CD8-positive, alpha-beta T cell (primary cell): ENCODE measurements at regions of chr1 and their contacts with region 1.

Region 1: DNA sequence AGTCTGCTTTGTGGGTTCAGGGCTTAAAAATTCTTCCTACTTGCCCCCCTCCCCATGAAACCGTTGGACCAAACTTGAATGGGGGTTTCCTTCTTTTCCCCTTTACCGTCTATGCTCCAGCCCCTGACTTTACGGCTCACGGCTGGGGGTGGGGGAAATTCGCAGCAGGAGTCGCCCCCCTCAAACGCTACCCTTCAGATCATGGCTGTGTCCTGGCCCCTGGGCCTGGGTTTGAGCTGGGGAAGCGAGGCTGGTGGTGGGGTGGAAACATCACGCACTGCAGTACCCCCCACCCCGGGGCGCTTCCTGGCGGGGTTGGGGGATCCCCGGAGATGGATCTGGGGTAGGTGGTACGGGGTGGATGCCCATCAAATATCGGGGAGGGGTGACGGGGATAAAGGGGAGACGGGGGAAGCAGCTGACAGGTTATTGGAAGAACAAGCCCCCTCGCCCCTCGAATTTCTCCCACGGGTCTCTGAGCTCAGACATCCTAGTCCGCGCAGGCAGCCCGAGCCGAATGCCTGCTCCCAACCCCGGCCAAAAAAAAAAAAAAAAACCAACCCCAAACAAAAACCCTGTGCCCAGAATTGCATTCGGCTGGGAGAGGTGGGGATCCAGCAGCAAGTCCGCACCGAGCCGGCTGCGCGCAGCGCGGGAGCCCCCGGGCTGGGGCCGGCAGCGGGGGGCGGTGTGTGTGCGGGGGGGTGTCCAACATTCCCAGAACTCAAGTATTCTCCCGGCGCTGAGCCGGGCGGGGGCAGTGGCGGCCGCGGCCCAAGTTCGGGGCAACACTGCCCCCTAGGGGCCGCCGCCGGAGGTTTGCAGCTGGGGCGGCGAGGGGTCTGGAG is 59.0 kb upstream of the ACOT11 start:
- DNase-seq: peak; percentile 45 to 89 (median 74)
- ATAC-seq: peak; percentile 47
- H3K4me3 ChIP-seq: peak overlapping the region; percentile 71 to 90
- H3K4me3 Mint-ChIP-seq: peak overlapping the region; percentile 83
- H3K27ac ChIP-seq: peak overlapping the region; percentile 42 to 73
- H3K27ac Mint-ChIP-seq: peak overlapping the region; percentile 67
- H3K4me1 ChIP-seq: peaks cover 34% of the 10 kb centered on the region
- H3K4me1 Mint-ChIP-seq: peaks cover 37% of the 10 kb centered on the region
- H3K27me3 ChIP-seq: peaks cover 0 to 3% of the 10 kb centered on the region in 2 experiments
- H3K27me3 Mint-ChIP-seq: peaks cover 3% of the 10 kb centered on the region
- CTCF ChIP-seq: peak; percentile 96

Region 2: GRCh38 chr1:53860967-53861411 is 628.0 kb before region 1 on chr1:
- CTCF ChIA-PET with region 1: interaction called, 3 read pairs
- POLR2A ChIA-PET with region 1: no interaction called
- intact Hi-C with region 1: loop called in 1 of 2 experiments (anchors 2 kb)
- DNase-seq: peak in 8 of 9 experiments; percentile 15 to 75 (median 50)
- ATAC-seq: peak; percentile 83
- H3K4me3 ChIP-seq: no peak overlapping the region
- H3K4me3 Mint-ChIP-seq: no peak overlapping the region
- H3K27ac ChIP-seq: no peak overlapping the region
- H3K27ac Mint-ChIP-seq: no peak overlapping the region
- H3K4me1 ChIP-seq: no peaks in the 10 kb centered on the region
- H3K4me1 Mint-ChIP-seq: no peaks in the 10 kb centered on the region
- H3K27me3 ChIP-seq: no peaks in the 10 kb centered on the region
- H3K27me3 Mint-ChIP-seq: no peaks in the 10 kb centered on the region
- CTCF ChIP-seq: peak; percentile 79

Region 3: DNA sequence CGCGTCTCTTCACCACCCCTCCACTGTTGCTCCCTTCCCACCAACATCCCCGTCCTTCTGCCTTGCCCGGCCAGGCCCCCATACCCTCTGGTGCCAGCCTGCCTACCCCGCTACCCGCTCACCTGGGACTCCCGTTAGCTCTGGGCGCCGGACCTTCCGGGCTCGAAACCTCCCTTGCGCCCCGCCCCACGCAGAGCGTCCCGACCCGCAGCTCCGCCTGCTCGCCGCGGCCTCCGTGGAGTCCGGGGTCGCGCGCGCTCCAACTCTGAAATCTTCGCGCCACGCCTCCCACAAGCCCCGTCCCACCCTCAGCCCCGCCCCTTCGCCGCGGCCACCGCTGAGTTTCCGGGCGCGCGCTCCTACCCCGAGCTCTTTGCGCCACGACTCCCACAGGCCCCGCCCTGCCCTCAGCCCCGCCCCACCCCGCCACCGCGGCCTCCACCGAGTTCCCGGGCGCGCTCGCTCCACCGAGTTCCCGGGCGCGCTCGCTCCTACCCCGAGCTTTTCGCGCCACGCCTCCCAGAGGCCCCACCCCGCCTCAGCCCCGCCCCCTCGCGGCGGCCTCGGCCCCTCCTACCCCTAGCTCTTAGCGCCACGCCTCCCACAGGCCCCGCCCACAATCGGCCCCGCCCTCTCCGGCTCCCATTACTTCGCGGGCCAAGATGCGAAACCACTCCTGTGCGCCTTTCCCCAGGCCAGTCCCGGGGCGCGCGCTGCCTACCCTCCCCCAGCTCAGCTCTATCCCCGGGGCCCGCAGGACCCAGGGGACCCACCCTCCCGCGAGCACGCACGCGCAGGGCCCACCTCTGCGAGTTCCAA is 543.4 kb before region 1 on chr1 and contains the start of gene IFT25:
- CTCF ChIA-PET with region 1: no interaction called
- POLR2A ChIA-PET with region 1: interaction called, 3 read pairs
- intact Hi-C with region 1: loop called in 1 of 2 experiments (anchors 2 kb)
- DNase-seq: peak; percentile 96 to 100 (median 98)
- ATAC-seq: peak; percentile 81
- H3K4me3 ChIP-seq: peak within 1 kb of the TSS; percentile 81 to 94
- H3K4me3 Mint-ChIP-seq: peak within 1 kb of the TSS; percentile 98
- H3K27ac ChIP-seq: peak within 1 kb of the TSS; percentile 58 to 88
- H3K27ac Mint-ChIP-seq: peak within 1 kb of the TSS; percentile 96
- H3K4me1 ChIP-seq: peaks cover 27% of the 10 kb centered on the region
- H3K4me1 Mint-ChIP-seq: peaks cover 57% of the 10 kb centered on the region
- H3K27me3 ChIP-seq: no peaks in the 10 kb centered on the region
- H3K27me3 Mint-ChIP-seq: no peaks in the 10 kb centered on the region
- CTCF ChIP-seq: no peak
- total RNA-seq, gene IFT25: 12.8 to 13.1 TPM

Region 4: DNA sequence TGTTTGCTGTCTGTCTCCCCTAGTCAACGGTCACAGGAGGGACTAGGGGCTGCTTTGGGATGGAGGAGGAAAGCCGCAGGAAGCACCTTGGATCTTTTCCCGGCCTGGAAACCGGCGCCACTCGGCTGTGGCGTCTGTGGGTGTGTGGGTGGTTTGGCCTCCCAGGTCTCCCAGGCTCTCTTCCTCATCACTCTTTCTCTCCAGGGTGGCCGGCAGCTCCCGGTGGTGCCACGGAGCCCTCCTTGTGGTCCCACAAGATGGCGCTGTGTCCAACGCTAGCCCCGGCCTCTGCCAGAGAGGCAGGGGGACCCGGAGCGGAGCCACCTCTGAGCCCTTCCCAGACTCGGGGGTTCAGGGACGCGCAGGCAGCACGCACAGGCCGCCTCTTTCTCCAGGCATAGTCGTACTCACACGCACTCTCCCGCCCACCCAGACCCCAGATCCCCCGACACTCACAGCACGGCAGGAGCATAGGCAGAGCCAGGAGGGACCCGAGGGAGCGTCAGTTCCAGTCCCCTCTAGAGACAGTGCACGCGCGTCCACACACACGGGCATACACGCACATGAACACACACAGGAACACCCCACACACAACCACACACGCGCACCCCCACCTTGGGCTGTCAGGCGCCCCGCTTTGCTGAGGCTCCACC is 367.4 kb before region 1 on chr1:
- CTCF ChIA-PET with region 1: interaction called, 35 read pairs
- POLR2A ChIA-PET with region 1: interaction called, 5 read pairs
- intact Hi-C with region 1: loop called in 1 of 2 experiments (anchors 1 kb)
- DNase-seq: peak; percentile 41 to 81 (median 70)
- ATAC-seq: peak; percentile 94
- H3K4me3 ChIP-seq: no peak overlapping the region
- H3K4me3 Mint-ChIP-seq: peak overlapping the region; percentile 59
- H3K27ac ChIP-seq: no peak overlapping the region
- H3K27ac Mint-ChIP-seq: no peak overlapping the region
- H3K4me1 ChIP-seq: peaks cover 5% of the 10 kb centered on the region
- H3K4me1 Mint-ChIP-seq: peaks cover 6% of the 10 kb centered on the region
- H3K27me3 ChIP-seq: peaks cover 0 to 11% of the 10 kb centered on the region in 2 experiments
- H3K27me3 Mint-ChIP-seq: peaks cover 3% of the 10 kb centered on the region
- CTCF ChIP-seq: peak; percentile 53

Region 5: GRCh38 chr1:54287176-54287650 is 201.8 kb before region 1 on chr1:
- CTCF ChIA-PET with region 1: interaction called, 4 read pairs
- POLR2A ChIA-PET with region 1: interaction called, 3 read pairs
- intact Hi-C with region 1: loop called (anchors 5 kb)
- DNase-seq: peak; percentile 12 to 87 (median 71)
- ATAC-seq: peak; percentile 78
- H3K4me3 ChIP-seq: peak overlapping the region in 1 of 2 experiments; percentile 57
- H3K4me3 Mint-ChIP-seq: peak overlapping the region; percentile 78
- H3K27ac ChIP-seq: peak overlapping the region; percentile 61 to 71
- H3K27ac Mint-ChIP-seq: peak overlapping the region; percentile 99
- H3K4me1 ChIP-seq: peaks cover 96% of the 10 kb centered on the region
- H3K4me1 Mint-ChIP-seq: peaks cover 90% of the 10 kb centered on the region
- H3K27me3 ChIP-seq: no peaks in the 10 kb centered on the region
- H3K27me3 Mint-ChIP-seq: no peaks in the 10 kb centered on the region
- CTCF ChIP-seq: no peak

Region 6: GRCh38 chr1:54474639-54475251 is 14.3 kb before region 1 on chr1:
- CTCF ChIA-PET with region 1: interaction called, 7 read pairs
- POLR2A ChIA-PET with region 1: interaction called, 12 read pairs
- intact Hi-C with region 1: loop called in 1 of 2 experiments (anchors 1 kb)
- DNase-seq: peak in 5 of 9 experiments; percentile 42 to 67 (median 57)
- ATAC-seq: peak; percentile 56
- H3K4me3 ChIP-seq: peak overlapping the region; percentile 42 to 46
- H3K4me3 Mint-ChIP-seq: peak overlapping the region; percentile 88
- H3K27ac ChIP-seq: peak overlapping the region in 1 of 2 experiments; percentile 84
- H3K27ac Mint-ChIP-seq: peak overlapping the region; percentile 87
- H3K4me1 ChIP-seq: peaks cover 41% of the 10 kb centered on the region
- H3K4me1 Mint-ChIP-seq: peaks cover 51% of the 10 kb centered on the region
- H3K27me3 ChIP-seq: no peaks in the 10 kb centered on the region
- H3K27me3 Mint-ChIP-seq: no peaks in the 10 kb centered on the region
- CTCF ChIP-seq: no peak

Region 7: DNA sequence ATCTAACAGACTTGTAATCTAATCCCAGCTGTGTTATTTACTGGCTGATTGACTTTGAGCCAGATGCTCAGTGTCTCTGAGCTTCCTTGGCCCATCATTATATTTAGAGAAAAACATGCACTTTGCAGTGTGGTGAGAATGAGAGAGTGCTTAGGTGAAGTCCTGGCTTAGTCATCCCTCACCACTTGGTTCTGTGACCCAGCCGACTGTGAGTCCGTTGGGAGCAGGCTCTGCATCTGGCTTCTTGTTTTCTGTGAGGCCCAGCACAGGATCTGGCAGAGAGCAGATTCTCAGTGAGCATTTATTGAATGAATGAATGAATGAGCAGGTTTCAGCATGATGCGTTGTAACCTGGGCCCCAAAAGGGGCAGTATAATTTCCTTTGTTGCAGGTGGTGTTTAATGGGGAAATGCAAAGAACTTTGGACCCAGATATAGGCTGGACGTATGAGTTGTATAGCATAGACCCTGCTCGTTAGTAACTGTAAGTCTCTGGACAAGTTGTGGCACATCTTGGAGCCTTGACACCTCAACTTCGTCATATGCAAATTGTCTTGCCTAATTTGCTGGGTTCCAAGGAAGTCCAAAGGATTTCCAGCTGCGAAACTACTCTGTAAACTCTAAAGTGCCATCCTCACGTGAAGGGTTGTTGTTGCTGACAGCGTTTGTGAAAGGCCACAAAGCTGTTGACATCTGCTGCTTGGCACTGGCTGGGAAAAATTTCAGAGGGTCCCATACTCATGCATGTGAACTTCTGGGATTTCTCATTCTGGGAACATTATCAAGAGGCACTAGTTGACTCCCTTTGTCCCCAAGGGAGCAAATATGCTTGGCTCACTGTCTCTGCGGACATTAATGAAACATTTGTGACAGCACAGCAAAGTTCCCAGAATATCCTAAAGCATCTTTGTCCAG is 865.0 kb after region 1 on chr1:
- CTCF ChIA-PET with region 1: no interaction called
- POLR2A ChIA-PET with region 1: no interaction called
- intact Hi-C with region 1: no loop called
- DNase-seq: no peak
- ATAC-seq: no peak
- H3K4me3 ChIP-seq: no peak overlapping the region
- H3K4me3 Mint-ChIP-seq: no peak overlapping the region
- H3K27ac ChIP-seq: no peak overlapping the region
- H3K27ac Mint-ChIP-seq: no peak overlapping the region
- H3K4me1 ChIP-seq: no peaks in the 10 kb centered on the region
- H3K4me1 Mint-ChIP-seq: no peaks in the 10 kb centered on the region
- H3K27me3 ChIP-seq: no peaks in the 10 kb centered on the region
- H3K27me3 Mint-ChIP-seq: peaks cover 8% of the 10 kb centered on the region
- CTCF ChIP-seq: no peak